GM12878 (cell line): ENCODE measurements at regions of chr5 and their contacts with region 1.

Region 1: DNA sequence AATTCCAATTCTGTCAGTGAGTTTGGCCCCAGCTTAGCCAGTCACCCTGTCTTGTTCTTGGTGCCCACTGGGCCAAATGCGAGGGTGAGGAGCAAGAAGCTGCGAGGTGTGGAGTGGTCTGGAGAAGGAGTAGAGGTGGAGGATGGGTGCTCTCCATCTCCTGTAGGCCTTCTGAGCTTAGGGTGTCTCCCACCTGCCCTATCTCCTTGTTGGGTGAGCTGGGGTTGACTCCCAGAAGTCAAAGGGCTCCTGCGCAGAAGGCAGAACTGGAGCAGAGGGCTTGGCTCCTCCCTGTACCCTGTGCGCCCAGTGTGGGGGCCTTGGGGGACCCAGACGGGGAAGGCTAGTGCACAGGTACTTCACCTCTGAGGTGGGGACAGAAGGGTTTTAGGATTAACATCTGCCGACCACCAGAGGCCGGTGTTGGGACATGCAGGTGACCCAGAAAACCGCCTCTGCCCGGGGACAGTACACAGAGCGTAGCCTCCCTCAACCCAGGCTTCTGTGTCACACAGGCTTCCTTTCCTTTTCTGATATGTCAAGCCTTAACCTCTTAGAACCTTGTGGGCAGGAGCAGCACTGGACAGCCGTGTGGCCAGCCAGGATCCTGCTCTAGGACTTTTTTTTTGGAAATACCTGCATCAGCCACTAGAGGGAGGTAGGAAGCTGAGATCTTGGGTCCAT is 16.9 kb downstream of the IL5 start:
- DNase-seq: peak; percentile 53
- ATAC-seq: peak; percentile 73
- H3K4me3 ChIP-seq: no peak overlapping the region
- H3K27ac ChIP-seq: peak overlapping the region; percentile 84; the same call in 1 of the 2 replicates
- H3K4me1 ChIP-seq: peaks cover 32% of the 10 kb centered on the region
- H3K27me3 ChIP-seq: no peaks in the 10 kb centered on the region
- CTCF ChIP-seq: peak; percentile 57 to 87 (median 76); a peak in 5 of 6 replicates
- EP300 ChIP-seq: no peak
- POLR2A ChIP-seq: no peak
- RAD21 ChIP-seq: peak; percentile 80

Region 2: DNA sequence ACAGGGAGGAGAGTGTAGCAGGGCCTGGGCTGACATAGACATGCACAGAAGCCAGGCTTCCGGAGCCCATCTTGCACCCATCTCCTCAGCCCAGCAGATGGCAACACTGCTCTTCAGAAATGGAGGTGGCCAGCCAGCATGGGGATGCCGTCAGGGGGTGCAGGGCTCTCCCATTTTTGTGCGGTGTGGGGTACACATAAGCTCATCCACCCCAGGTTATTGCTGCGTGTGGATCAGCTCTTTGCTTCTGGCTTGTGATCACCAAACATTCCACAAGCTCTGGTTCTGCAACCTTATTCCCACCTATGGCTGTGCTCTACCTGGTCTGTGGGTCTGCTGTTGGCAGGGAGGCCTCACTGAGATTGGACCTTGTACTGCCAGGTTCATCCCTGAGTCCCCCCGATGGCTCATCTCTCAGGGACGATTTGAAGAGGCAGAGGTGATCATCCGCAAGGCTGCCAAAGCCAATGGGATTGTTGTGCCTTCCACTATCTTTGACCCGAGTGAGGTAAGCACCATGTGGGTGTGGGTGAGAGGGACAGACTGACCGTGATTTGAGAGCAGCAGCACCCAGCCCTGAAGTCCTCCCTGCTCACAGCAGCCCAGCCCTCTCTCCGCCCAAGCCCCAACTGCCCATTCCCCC is 139.7 kb before region 1 on chr5:
- CTCF ChIA-PET with region 1: interaction called, 18 read pairs
- POLR2A ChIA-PET with region 1: no interaction called
- RAD21 ChIA-PET with region 1: interaction called, 17 read pairs
- SMC1A ChIA-PET with region 1: interaction called, 6 read pairs
- in situ Hi-C with region 1: no loop called
- intact Hi-C with region 1: no loop called
- DNase-seq: peak; percentile 70
- ATAC-seq: peak; percentile 96
- H3K4me3 ChIP-seq: no peak overlapping the region
- H3K27ac ChIP-seq: no peak overlapping the region
- H3K4me1 ChIP-seq: peaks cover 20% of the 10 kb centered on the region
- H3K27me3 ChIP-seq: no peaks in the 10 kb centered on the region
- CTCF ChIP-seq: peak; percentile 86 to 97 (median 93)
- EP300 ChIP-seq: no peak
- POLR2A ChIP-seq: no peak
- RAD21 ChIP-seq: peak; percentile 91

Region 3: GRCh38 chr5:132540764-132541163 is 14.3 kb after region 1 on chr5:
- CTCF ChIA-PET with region 1: interaction called, 4 read pairs
- POLR2A ChIA-PET with region 1: no interaction called
- RAD21 ChIA-PET with region 1: no interaction called
- SMC1A ChIA-PET with region 1: interaction called, 11 read pairs
- in situ Hi-C with region 1: no loop called
- intact Hi-C with region 1: no loop called
- DNase-seq: no peak
- ATAC-seq: no peak
- H3K4me3 ChIP-seq: no peak overlapping the region
- H3K27ac ChIP-seq: no peak overlapping the region
- H3K4me1 ChIP-seq: 0 out of 2 replicates have a peak, but pooled peaks cover 3% of the 10 kb centered on the region
- H3K27me3 ChIP-seq: no peaks in the 10 kb centered on the region
- CTCF ChIP-seq: no peak
- EP300 ChIP-seq: no peak
- POLR2A ChIP-seq: no peak
- RAD21 ChIP-seq: no peak

Region 4: GRCh38 chr5:132629230-132629944 is 103.0 kb after region 1 on chr5:
- CTCF ChIA-PET with region 1: interaction called, 13 read pairs
- POLR2A ChIA-PET with region 1: no interaction called
- RAD21 ChIA-PET with region 1: interaction called, 6 read pairs
- SMC1A ChIA-PET with region 1: interaction called, 12 read pairs
- in situ Hi-C with region 1: no loop called
- intact Hi-C with region 1: no loop called
- DNase-seq: no peak
- ATAC-seq: peak; percentile 86
- H3K4me3 ChIP-seq: no peak overlapping the region; the same call in 1 of the 2 replicates
- H3K27ac ChIP-seq: peak overlapping the region; percentile 70
- H3K4me1 ChIP-seq: peaks cover 11% of the 10 kb centered on the region; the same call in 1 of the 2 replicates
- H3K27me3 ChIP-seq: no peaks in the 10 kb centered on the region
- CTCF ChIP-seq: no peak
- EP300 ChIP-seq: no peak
- POLR2A ChIP-seq: no peak
- RAD21 ChIP-seq: no peak

Region 5: DNA sequence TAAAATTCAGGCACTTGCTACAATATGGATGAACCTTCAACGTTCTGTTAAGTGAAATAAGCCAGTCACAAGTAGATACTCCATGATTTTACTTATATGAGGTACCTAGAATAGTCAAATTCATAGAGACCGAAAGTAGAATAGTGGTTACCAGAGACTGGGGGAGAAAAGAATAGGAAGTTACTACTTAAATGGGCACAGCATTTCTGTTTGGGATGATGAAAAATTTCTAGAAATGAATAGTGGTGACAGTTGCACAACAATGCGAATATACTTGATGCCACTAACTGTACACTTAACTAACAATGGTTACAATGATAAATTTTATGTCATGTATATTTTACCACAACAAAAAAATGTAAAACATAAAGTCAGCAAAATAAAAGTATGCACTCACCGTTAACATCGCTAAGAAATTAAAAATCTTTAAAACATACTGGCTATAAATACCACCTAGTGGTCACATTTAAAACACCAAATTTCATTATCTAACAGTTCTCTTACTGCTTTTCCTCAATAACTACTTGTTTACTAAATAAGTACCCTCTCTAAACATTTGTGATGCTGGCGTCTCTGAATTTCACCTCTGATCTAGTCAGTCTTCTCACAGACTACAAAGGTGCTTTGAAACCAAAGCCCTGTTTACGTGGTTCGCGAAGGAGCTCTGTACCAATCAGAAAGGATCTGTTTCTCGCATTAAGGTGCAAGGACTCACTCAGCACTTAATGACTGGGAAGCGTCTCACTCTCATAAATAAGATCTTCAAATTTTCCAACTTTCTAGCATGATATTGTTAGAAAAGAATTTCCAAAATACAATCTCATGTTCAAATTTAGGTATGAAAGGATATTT is 188.2 kb after region 1 on chr5:
- CTCF ChIA-PET with region 1: interaction called, 11 read pairs
- POLR2A ChIA-PET with region 1: no interaction called
- RAD21 ChIA-PET with region 1: interaction called, 3 read pairs
- SMC1A ChIA-PET with region 1: interaction called, 19 read pairs
- in situ Hi-C with region 1: no loop called
- intact Hi-C with region 1: no loop called
- DNase-seq: no peak
- ATAC-seq: peak; percentile 64
- H3K4me3 ChIP-seq: no peak overlapping the region
- H3K27ac ChIP-seq: no peak overlapping the region
- H3K4me1 ChIP-seq: no peaks in the 10 kb centered on the region
- H3K27me3 ChIP-seq: no peaks in the 10 kb centered on the region
- CTCF ChIP-seq: peak in 1 of 3 experiments; percentile 28; a peak in 2 of 6 replicates
- EP300 ChIP-seq: no peak
- POLR2A ChIP-seq: no peak
- RAD21 ChIP-seq: 0 out of 2 replicates have a peak, but pooled peaks have one; percentile 8

Region 6: GRCh38 chr5:132807163-132807838 is 280.9 kb after region 1 on chr5:
- CTCF ChIA-PET with region 1: interaction called, 16 read pairs
- POLR2A ChIA-PET with region 1: no interaction called
- RAD21 ChIA-PET with region 1: interaction called, 10 read pairs
- SMC1A ChIA-PET with region 1: interaction called, 8 read pairs
- in situ Hi-C with region 1: no loop called
- intact Hi-C with region 1: no loop called
- DNase-seq: peak; percentile 20
- ATAC-seq: peak; percentile 94
- H3K4me3 ChIP-seq: no peak overlapping the region
- H3K27ac ChIP-seq: no peak overlapping the region
- H3K4me1 ChIP-seq: no peaks in the 10 kb centered on the region
- H3K27me3 ChIP-seq: peaks cover 0 to 4% of the 10 kb centered on the region in 2 experiments; a peak in 2 of 4 replicates
- CTCF ChIP-seq: peak; percentile 3 to 45 (median 36); a peak in 3 of 6 replicates
- EP300 ChIP-seq: peak; percentile 17 to 59; a peak in 2 of 4 replicates
- POLR2A ChIP-seq: no peak
- RAD21 ChIP-seq: no peak

Region 7: DNA sequence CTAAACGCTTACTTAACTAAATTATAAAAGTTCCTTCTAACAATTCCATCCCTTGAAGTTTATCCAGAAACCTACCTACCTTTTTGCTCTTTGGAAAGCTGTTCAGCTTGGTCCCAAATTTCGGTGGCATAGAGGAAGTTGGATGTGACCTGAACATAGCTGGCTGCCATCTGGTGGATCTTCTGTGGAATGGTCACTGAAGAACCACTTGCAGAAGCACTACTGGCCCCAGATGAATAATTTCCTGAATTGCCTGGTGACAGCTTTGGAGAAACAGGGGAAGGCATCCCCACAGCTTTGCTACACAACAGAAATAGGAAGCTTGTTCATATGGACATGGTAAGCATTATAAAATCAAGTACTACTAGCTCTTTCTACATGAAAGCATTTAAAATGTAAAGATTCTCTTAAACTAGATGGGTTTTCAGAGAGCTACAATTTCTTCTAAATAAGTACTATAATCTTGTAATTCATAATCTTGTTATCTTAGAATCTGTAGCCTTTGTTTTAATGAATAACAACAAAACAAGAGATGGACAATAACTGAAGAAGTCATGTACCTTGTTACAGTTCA is 356.9 kb after region 1 on chr5:
- CTCF ChIA-PET with region 1: interaction called, 10 read pairs
- POLR2A ChIA-PET with region 1: no interaction called
- RAD21 ChIA-PET with region 1: interaction called, 5 read pairs
- SMC1A ChIA-PET with region 1: interaction called, 17 read pairs
- in situ Hi-C with region 1: no loop called
- intact Hi-C with region 1: no loop called
- DNase-seq: no peak
- ATAC-seq: peak; percentile 96
- H3K4me3 ChIP-seq: no peak overlapping the region
- H3K27ac ChIP-seq: no peak overlapping the region
- H3K4me1 ChIP-seq: no peaks in the 10 kb centered on the region
- H3K27me3 ChIP-seq: no peaks in the 10 kb centered on the region
- CTCF ChIP-seq: peak; percentile 61 to 78 (median 67)
- EP300 ChIP-seq: no peak
- POLR2A ChIP-seq: no peak
- RAD21 ChIP-seq: peak; percentile 64